Transverse colon (tissue), 4 donors: ENCODE measurements at regions of chr17 and their contacts with region 1.

Region 1: GRCh38 chr17:7989781-7990655 is 12.4 kb upstream of the GUCY2D start:
- DNase-seq: peak; percentile 90
- H3K4me3 ChIP-seq: peak overlapping the region; percentile 21 to 56 (median 48)
- H3K27ac ChIP-seq: peak overlapping the region; percentile 59 to 75 (median 70)
- H3K4me1 ChIP-seq: peaks cover 0 to 14% (median 5%) of the 10 kb centered on the region in 4 donors
- H3K27me3 ChIP-seq: peaks cover 2% of the 10 kb centered on the region
- CTCF ChIP-seq: peak; percentile 94 to 99 (median 97)
- EP300 ChIP-seq: no peak
- POLR2A ChIP-seq: no peak

Region 2: GRCh38 chr17:7856883-7857723 is 132.9 kb before region 1 on chr17 and contains the start of gene NAA38:
- in situ Hi-C with region 1: loop called in 2 of 4 experiments (anchors 25 kb)
- intact Hi-C with region 1: loop called (anchors 5 kb)
- DNase-seq: peak; percentile 97
- H3K4me3 ChIP-seq: peak within 1 kb of the TSS; percentile 50 to 62 (median 53)
- H3K27ac ChIP-seq: peak within 1 kb of the TSS; percentile 90 to 97 (median 94)
- H3K4me1 ChIP-seq: peaks cover 23 to 36% (median 28%) of the 10 kb centered on the region in 4 donors
- H3K27me3 ChIP-seq: no peaks in the 10 kb centered on the region
- CTCF ChIP-seq: peak; percentile 17 to 47 (median 32)
- EP300 ChIP-seq: no peak
- POLR2A ChIP-seq: peak; percentile 73
- total RNA-seq, gene NAA38: 59.8 to 95.3 (median 86.5) TPM

Region 3: GRCh38 chr17:7862692-7863437 is 127.2 kb before region 1 on chr17:
- in situ Hi-C with region 1: loop called in 2 of 4 experiments (anchors 25 kb)
- intact Hi-C with region 1: loop called (anchors 5 kb)
- DNase-seq: peak; percentile 31
- H3K4me3 ChIP-seq: no peak overlapping the region
- H3K27ac ChIP-seq: no peak overlapping the region
- H3K4me1 ChIP-seq: peaks cover 6 to 27% (median 15%) of the 10 kb centered on the region in 4 donors
- H3K27me3 ChIP-seq: no peaks in the 10 kb centered on the region
- CTCF ChIP-seq: peak; percentile 81 to 94 (median 86)
- EP300 ChIP-seq: no peak
- POLR2A ChIP-seq: no peak

Region 4: DNA sequence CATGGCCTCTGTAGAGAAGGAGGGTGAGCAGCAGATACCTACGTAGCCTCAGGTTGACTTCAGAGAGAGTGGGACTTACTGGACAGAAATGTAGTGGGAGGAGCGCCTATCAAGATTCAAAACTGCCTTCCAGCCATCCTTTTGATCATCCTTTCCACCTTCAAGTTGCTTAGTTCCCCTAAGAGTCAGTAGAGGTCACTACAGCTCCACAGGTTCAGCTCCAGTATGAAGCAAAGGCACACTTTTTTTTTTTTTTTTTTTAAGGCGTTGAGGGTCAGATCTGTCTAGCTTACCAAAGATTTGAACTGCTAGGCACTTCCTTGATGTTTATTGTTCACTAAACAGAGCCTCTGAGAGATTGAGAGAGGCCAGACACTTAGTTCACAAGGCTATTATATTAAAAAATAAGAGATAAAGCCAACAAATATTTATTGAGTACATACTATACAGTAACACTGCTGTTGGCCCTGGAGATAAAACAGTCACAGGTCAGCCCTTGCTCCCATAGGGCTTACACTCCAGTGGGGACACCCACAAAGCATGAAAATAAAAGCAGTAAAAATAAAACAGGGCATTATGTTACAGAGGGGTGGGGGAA is 77.0 kb before region 1 on chr17:
- in situ Hi-C with region 1: loop called in 2 of 4 experiments (anchors 5 kb)
- intact Hi-C with region 1: loop called (anchors 2 kb)
- DNase-seq: no peak
- H3K4me3 ChIP-seq: no peak overlapping the region
- H3K27ac ChIP-seq: peak overlapping the region in 1 of 4 donors; percentile 34
- H3K4me1 ChIP-seq: peaks cover 6 to 27% (median 20%) of the 10 kb centered on the region in 4 donors
- H3K27me3 ChIP-seq: no peaks in the 10 kb centered on the region
- CTCF ChIP-seq: peak; percentile 63 to 78 (median 72)
- EP300 ChIP-seq: no peak
- POLR2A ChIP-seq: no peak

Region 5: GRCh38 chr17:7922845-7923628 is 67.0 kb before region 1 on chr17:
- in situ Hi-C with region 1: loop called in 1 of 4 experiments (anchors 10 kb)
- intact Hi-C with region 1: no loop called
- DNase-seq: peak; percentile 88
- H3K4me3 ChIP-seq: peak overlapping the region in 3 of 4 donors; percentile 28 to 42 (median 37)
- H3K27ac ChIP-seq: peak overlapping the region; percentile 53 to 75 (median 57)
- H3K4me1 ChIP-seq: peaks cover 2 to 12% (median 8%) of the 10 kb centered on the region in 4 donors
- H3K27me3 ChIP-seq: no peaks in the 10 kb centered on the region
- CTCF ChIP-seq: no peak
- EP300 ChIP-seq: no peak
- POLR2A ChIP-seq: peak; percentile 71

Region 6: DNA sequence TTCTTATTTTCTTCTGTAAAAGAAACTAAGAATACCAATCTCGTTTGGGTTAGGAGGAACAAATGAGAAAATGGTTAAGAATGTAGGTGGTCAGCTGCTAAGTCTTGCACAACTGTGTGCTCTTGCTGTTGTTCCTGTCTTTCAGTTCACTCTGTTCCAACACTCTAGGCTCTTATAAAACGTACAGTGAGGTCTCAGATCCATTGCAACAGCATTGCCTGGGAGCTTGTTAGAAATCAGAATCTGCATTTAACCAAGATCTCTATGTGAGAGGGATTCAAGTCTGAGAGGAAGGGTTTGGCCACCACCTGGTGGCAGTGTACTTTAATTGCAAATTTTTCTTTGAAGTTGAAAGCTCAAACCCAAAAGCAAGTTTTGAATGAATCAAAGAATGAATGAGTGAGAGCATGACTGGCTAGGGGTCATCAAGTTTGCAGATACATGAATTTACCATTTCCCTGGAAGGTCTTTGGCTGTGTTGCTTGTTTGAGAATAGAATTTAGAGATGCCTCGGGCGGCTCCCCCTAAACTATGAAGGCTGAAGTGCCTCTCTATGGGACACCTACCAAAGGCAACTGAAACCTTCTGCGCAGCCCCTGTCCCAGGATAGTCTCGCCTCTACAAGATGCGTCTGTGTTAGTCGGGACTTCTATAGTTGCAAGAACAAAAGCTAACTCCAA is 51.4 kb after region 1 on chr17:
- in situ Hi-C with region 1: no loop called
- intact Hi-C with region 1: no loop called
- DNase-seq: peak; percentile 56
- H3K4me3 ChIP-seq: no peak overlapping the region
- H3K27ac ChIP-seq: peak overlapping the region; percentile 14 to 65 (median 52)
- H3K4me1 ChIP-seq: peaks cover 0 to 12% (median 10%) of the 10 kb centered on the region in 4 donors
- H3K27me3 ChIP-seq: peaks cover 31% of the 10 kb centered on the region
- CTCF ChIP-seq: peak; percentile 40 to 72 (median 48)
- EP300 ChIP-seq: no peak
- POLR2A ChIP-seq: no peak

Region 7: DNA sequence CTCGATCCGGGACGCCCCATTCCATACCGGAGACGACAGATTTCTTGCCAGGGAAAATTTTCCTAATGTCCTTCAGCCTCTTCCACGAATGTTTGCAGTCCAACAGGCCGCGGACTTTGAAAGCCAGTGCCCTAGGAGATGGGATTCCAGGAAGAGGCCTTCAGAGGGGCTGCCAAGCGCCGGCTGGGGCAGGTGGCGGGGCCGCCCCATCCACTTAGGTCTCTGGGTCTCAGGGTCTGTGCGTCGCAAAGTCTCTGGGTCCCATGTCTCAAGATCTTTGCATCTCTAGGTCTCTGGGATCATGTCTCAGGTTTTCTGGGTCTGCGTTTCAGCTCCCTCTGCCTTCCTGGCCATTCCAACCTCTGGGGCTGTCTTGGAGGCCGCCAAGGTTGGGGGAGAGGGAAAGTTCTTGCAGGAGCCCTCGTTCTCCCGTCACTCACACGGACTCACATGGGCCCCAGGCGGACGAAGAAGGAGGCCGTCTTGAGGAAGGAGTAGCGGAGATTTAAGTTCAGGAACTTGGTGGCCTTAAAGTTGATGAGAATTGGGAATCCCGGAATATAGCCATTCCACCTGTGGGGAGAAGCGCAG is 90.3 kb after region 1 on chr17:
- in situ Hi-C with region 1: no loop called
- intact Hi-C with region 1: no loop called
- DNase-seq: no peak
- H3K4me3 ChIP-seq: peak overlapping the region in 2 of 4 donors; percentile 40 to 50
- H3K27ac ChIP-seq: no peak overlapping the region
- H3K4me1 ChIP-seq: peaks cover 0 to 18% (median 16%) of the 10 kb centered on the region in 4 donors
- H3K27me3 ChIP-seq: peaks cover 68% of the 10 kb centered on the region
- CTCF ChIP-seq: peak in 4 of 5 experiments; percentile 9 to 30 (median 20)
- EP300 ChIP-seq: no peak
- POLR2A ChIP-seq: no peak